K562 (cell line): ENCODE measurements at regions of chr17 and their contacts with region 1.

Region 1: DNA sequence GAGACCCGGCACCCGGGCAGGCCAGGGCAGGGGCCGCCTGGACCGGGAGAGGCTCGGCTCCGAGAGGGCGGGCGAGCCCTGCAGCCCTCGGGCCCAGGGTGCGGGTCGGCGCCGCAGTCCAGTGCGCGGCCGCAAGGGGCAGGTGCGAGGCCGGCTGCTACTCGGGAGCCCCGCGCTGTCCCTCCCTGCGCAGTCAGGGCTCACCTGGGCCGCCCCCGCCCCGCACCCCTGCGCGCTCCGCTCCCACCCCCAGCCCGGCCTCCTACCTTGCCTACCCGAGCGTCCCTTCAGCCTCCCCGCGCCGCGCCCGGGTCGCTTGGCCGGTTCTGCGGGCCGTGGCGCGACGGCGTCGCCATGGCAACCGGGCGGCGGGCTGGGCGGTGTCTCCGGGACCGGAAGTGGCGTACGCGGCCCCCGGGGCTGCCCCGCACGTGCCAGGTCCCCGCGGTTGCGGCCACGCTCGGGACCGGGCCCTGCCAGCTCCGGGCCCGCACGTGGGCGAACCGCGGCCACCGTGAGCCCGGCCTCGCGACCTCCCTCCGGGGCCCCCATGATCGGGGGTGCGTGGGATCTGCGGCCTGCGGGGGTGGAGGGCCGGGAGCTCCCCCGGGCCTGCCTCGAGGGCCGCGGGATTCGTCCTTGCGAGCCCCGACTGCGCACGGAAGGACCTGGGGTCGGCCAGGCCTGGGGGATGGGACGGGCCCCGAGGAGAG is at the start of gene CYB561:
- DNase-seq: peak; percentile 84 to 94 (median 92)
- ATAC-seq: peak; percentile 91
- H3K4me3 ChIP-seq: peak within 1 kb of the TSS; percentile 42
- H3K27ac ChIP-seq: peak within 1 kb of the TSS; percentile 94
- H3K4me1 ChIP-seq: peaks cover 42 to 60% of the 10 kb centered on the region in 2 experiments
- H3K27me3 ChIP-seq: no peaks in the 10 kb centered on the region
- CTCF ChIP-seq: peak; percentile 50 to 78 (median 56); a peak in 5 of 6 replicates
- EP300 ChIP-seq: no peak
- POLR2A ChIP-seq: no peak
- RAD21 ChIP-seq: peak in 1 of 2 experiments; percentile 28; a peak in 1 of 4 replicates
- polyA plus RNA-seq, gene CYB561: 4.0 to 4.9 TPM

Region 2: DNA sequence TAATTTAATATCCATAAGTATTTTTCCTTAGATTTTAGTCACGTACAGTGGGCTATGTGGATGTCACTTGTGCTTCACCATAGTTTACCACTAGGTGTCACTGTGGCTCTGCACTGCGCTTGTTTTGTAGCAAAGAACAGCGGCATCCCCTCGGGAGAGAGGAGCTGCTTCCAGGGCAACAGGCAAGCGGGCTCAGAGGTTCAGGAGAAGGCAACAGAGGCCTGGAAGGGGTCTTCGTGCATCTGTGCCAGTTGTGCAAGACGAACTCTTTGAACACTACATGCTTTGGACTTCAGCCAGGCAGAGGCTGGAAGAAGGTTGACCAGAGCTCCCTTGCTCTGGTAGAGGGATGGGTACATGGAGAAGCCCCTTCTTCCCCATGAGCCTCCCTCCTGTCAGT is 20.7 kb before region 1 on chr17:
- CTCF ChIA-PET with region 1: no interaction called
- POLR2A ChIA-PET with region 1: interaction called, 13 read pairs
- in situ Hi-C with region 1: no loop called
- intact Hi-C with region 1: no loop called
- DNase-seq: peak; percentile 76 to 88 (median 80)
- ATAC-seq: peak; percentile 89
- H3K4me3 ChIP-seq: no peak overlapping the region
- H3K27ac ChIP-seq: no peak overlapping the region
- H3K4me1 ChIP-seq: peaks cover 9 to 19% of the 10 kb centered on the region in 2 experiments
- H3K27me3 ChIP-seq: no peaks in the 10 kb centered on the region
- CTCF ChIP-seq: peak; percentile 91 to 96 (median 94)
- EP300 ChIP-seq: 0 out of 2 replicates have a peak, but pooled peaks have one; percentile 13
- POLR2A ChIP-seq: no peak
- RAD21 ChIP-seq: peak; percentile 98

Region 3: GRCh38 chr17:63434876-63435684 is 11.1 kb before region 1 on chr17:
- CTCF ChIA-PET with region 1: no interaction called
- POLR2A ChIA-PET with region 1: interaction called, 8 read pairs
- in situ Hi-C with region 1: no loop called
- intact Hi-C with region 1: loop called (anchors 2 kb)
- DNase-seq: no peak
- ATAC-seq: no peak
- H3K4me3 ChIP-seq: no peak overlapping the region
- H3K27ac ChIP-seq: peak overlapping the region; percentile 12; the same call in 1 of the 3 replicates
- H3K4me1 ChIP-seq: peaks cover 59 to 74% of the 10 kb centered on the region in 2 experiments
- H3K27me3 ChIP-seq: no peaks in the 10 kb centered on the region
- CTCF ChIP-seq: peak; percentile 34 to 43 (median 40); a peak in 4 of 6 replicates
- EP300 ChIP-seq: no peak
- POLR2A ChIP-seq: no peak
- RAD21 ChIP-seq: peak in 1 of 2 experiments; percentile 19; a peak in 1 of 4 replicates